Sigmoid colon (tissue), 7 donors: ENCODE measurements at regions of chr20 and their contacts with region 1.

Region 1: DNA sequence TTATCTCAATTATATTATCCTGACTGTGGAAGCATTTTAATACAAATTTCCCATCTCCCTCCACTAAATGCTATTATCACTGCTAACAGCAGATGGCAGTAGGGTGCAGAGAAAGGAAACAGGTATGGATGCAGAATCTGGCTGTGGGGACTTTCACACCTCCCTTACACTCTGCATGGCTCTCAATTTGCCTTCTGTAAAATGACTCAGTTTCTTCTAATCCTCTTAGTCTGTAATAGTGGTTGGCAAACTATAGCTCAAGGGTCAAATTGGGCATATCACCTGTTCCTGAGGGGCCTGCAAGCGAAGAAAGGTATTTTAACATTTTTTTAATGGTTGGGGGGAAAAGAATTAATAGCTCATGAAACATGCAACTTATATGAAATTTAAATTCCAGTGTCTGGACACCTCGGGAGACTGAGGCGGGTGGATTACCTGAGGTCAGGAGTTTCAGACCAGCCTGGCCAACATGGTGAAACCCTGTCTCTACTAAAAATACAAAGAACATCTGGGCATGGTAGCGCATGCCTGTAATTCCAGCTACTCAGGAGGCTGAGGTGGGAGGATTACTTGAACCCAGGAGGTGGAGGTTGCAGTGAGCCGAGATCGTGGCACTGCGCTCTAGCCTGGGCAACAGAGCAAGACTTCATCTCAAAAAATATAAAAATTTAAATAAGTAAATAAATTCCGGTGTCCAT is 83.5 kb downstream of the ZMYND8 start:
- DNase-seq: peak; percentile 71
- H3K4me3 ChIP-seq: no peak overlapping the region
- H3K27ac ChIP-seq: peak overlapping the region; percentile 75 to 84 (median 80)
- H3K4me1 ChIP-seq: peaks cover 0 to 54% (median 38%) of the 10 kb centered on the region in 4 donors
- H3K27me3 ChIP-seq: no peaks in the 10 kb centered on the region
- CTCF ChIP-seq: peak; percentile 83 to 97 (median 96)
- EP300 ChIP-seq: no peak
- POLR2A ChIP-seq: peak in 1 of 2 donors; percentile 11

Region 2: DNA sequence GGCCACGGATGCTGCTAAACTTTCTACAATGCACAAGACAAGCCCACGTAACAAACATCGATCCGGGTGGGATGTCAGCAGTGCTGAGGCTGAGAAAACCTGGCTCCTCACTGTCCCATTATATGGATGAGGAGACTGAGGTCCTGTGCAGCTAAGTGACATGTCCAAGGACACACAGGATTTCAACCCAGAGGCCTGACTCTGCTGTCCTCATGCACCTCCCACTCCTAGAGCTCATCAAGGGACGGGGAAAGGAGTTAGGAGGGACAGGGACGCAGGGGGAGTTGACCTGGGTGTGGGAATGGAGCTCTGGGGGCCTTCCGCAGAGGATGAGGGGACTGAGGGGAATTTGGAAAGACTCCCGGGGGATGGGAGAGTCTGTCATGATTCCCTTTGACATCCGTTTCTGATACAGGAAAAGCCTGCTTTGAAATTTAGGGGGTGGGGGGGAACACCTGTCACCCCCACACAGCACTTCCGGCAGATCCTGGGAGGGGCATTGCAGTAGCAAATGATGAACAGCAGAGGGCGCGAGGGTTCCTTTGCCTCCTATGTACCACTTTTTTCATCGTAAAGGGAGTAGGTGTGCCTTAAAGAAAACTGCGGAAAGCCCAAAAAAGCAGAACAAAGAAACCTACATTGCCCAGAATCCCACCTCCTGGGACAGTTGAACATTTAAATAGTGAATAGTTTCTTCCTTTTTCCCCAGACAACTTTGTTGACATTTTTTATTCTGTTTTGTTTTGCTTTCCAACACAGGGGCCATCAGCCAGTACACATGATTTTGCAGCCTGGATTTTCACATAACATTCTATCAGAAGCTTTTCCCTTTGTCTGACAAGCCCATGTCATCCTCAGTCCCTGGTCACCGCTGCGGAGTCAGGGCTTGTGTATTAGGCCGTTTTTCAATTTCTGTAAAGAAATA is 515.0 kb before region 1 on chr20:
- intact Hi-C with region 1: loop called (anchors 10 kb)
- DNase-seq: no peak
- H3K4me3 ChIP-seq: no peak overlapping the region
- H3K27ac ChIP-seq: no peak overlapping the region
- H3K4me1 ChIP-seq: peaks cover 0 to 4% (median 0%) of the 10 kb centered on the region in 4 donors
- H3K27me3 ChIP-seq: no peaks in the 10 kb centered on the region
- CTCF ChIP-seq: peak; percentile 38 to 95 (median 88)
- EP300 ChIP-seq: no peak
- POLR2A ChIP-seq: no peak

Region 3: GRCh38 chr20:47196091-47197081 is 76.7 kb before region 1 on chr20:
- intact Hi-C with region 1: loop called (anchors 2 kb)
- DNase-seq: peak; percentile 78
- H3K4me3 ChIP-seq: no peak overlapping the region
- H3K27ac ChIP-seq: no peak overlapping the region
- H3K4me1 ChIP-seq: peaks cover 0 to 6% (median 2%) of the 10 kb centered on the region in 4 donors
- H3K27me3 ChIP-seq: no peaks in the 10 kb centered on the region
- CTCF ChIP-seq: peak; percentile 72 to 96 (median 88)
- EP300 ChIP-seq: no peak
- POLR2A ChIP-seq: no peak

Region 4: DNA sequence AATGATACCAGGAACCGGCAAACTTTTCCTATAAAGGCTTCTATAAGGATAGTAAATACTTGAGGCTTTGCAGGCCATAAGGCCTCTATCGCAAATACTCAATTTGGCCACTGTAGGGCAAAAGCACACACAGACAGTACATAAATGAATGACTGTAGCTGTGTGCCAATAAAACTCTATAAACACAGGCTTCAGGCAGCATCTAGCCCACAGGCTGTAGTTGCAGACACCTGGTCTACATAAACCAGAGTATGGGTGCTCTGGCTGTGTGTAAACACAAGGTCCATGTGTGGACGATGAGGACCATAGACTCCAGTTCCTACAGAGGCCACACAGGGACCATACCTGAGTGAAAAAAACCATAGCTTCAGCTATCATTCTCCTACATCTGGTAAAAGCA is 31.2 kb after region 1 on chr20:
- intact Hi-C with region 1: no loop called
- DNase-seq: peak; percentile 77
- H3K4me3 ChIP-seq: no peak overlapping the region
- H3K27ac ChIP-seq: peak overlapping the region; percentile 67 to 97 (median 80)
- H3K4me1 ChIP-seq: peaks cover 0 to 63% (median 40%) of the 10 kb centered on the region in 4 donors
- H3K27me3 ChIP-seq: no peaks in the 10 kb centered on the region
- CTCF ChIP-seq: peak; percentile 9 to 46 (median 39)
- EP300 ChIP-seq: peak in 2 of 4 donors; percentile 47 to 56
- POLR2A ChIP-seq: no peak

Region 5: GRCh38 chr20:47317127-47317895 is 44.3 kb after region 1 on chr20:
- intact Hi-C with region 1: loop called (anchors 5 kb)
- DNase-seq: peak; percentile 95
- H3K4me3 ChIP-seq: peak overlapping the region in 2 of 4 donors; percentile 26 to 30
- H3K27ac ChIP-seq: peak overlapping the region; percentile 94 to 97 (median 96)
- H3K4me1 ChIP-seq: peaks cover 0 to 93% (median 73%) of the 10 kb centered on the region in 4 donors
- H3K27me3 ChIP-seq: no peaks in the 10 kb centered on the region
- CTCF ChIP-seq: no peak
- EP300 ChIP-seq: peak; percentile 92 to 99 (median 96)
- POLR2A ChIP-seq: peak; percentile 36 to 47

Region 6: GRCh38 chr20:47379433-47380150 is 106.5 kb after region 1 on chr20:
- intact Hi-C with region 1: loop called (anchors 1 kb)
- DNase-seq: no peak
- H3K4me3 ChIP-seq: no peak overlapping the region
- H3K27ac ChIP-seq: peak overlapping the region in 2 of 4 donors; percentile 20 to 67
- H3K4me1 ChIP-seq: peaks cover 0 to 27% (median 22%) of the 10 kb centered on the region in 4 donors
- H3K27me3 ChIP-seq: no peaks in the 10 kb centered on the region
- CTCF ChIP-seq: no peak
- EP300 ChIP-seq: peak in 2 of 4 donors; percentile 55 to 60
- POLR2A ChIP-seq: no peak

Region 7: GRCh38 chr20:47501483-47502270 is 228.6 kb after region 1 on chr20 and contains the start of gene NCOA3:
- intact Hi-C with region 1: loop called (anchors 10 kb)
- DNase-seq: peak; percentile 95
- H3K4me3 ChIP-seq: peak within 1 kb of the TSS; percentile 69 to 94 (median 91)
- H3K27ac ChIP-seq: peak within 1 kb of the TSS; percentile 91 to 96 (median 94)
- H3K4me1 ChIP-seq: peaks cover 0 to 24% (median 17%) of the 10 kb centered on the region in 4 donors
- H3K27me3 ChIP-seq: no peaks in the 10 kb centered on the region
- CTCF ChIP-seq: peak; percentile 42 to 81 (median 70)
- EP300 ChIP-seq: no peak
- POLR2A ChIP-seq: peak; percentile 93 to 96
- total RNA-seq, gene NCOA3: 22.8 to 51.0 (median 26.4) TPM

Region 8: DNA sequence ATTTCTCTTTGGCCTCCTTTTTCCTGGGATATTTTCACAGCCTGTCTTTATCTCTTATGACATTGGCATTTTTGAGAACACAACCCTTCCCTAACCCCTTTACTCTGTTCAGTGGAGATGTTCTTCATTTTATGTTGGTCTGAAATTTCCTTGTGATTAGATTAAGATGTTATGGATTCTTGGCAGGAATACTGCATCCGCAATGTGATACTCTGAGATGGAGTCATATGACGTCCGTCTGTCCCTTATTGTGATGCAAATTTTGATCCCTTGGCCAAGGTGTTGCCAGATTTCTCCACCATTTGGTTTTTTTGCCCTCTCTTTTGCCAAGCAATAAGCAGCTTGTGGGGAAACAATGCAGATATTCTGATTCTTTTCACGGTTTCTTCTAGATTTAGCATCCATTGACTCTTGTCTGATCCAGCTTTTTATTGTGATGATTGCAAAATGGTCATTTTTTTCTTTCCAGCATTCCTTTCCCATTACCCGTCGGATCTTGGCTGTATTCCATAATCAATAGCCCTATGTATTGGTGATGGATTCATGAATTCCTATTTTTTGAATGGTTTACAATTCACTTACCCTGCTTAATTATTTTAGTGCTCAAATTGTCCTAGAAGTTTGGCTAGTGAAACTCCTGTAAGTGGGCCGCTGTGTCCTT is 313.7 kb after region 1 on chr20:
- intact Hi-C with region 1: no loop called
- DNase-seq: no peak
- H3K4me3 ChIP-seq: no peak overlapping the region
- H3K27ac ChIP-seq: no peak overlapping the region
- H3K4me1 ChIP-seq: peaks cover 0 to 11% (median 1%) of the 10 kb centered on the region in 4 donors
- H3K27me3 ChIP-seq: no peaks in the 10 kb centered on the region
- CTCF ChIP-seq: no peak
- EP300 ChIP-seq: no peak
- POLR2A ChIP-seq: no peak

Region 9: DNA sequence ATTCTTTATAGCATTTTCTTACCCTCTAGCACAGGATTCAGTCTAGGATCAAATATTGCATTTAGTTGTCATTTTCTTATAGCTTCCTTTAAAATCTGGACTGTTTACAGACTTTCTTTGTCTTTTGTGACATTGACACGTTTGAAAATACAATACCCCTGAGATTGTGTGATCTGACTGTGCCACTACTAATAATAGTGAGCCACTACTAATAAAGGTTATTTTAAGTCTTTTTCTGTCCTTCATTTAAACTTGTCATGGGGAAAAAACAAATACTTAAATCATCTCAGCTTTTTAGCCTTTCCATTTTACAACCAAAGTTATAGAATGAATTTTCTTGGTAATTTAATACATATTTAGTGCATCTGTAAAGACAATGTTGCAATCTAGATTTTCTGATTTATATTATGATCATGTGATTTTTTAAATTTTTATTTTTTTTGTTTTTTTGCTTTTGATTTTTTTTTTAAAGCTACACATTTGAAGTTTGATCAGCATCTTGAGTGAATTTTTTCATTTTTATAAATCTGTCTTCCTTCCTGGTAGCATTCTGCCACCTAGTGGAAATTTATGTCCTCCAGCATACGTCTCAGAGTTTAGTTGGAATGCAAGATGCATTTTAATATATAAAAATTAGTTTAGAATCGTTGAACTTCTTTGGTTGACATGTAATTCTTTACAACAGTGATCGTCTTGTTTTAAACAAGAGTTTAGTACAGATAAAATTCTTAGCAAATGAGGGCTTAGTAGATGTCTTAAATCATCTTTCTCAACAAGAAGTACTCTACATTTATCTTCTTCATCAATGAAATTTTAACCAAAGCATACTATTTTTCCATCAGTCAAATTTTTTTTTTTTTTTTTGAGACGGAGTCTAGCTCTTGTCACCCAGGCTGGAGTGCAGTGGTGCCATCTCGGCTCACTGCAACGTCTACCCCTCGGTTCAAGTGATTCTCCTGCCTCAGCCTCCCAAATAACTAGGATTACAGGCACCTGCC is 348.1 kb after region 1 on chr20:
- intact Hi-C with region 1: loop called (anchors 5 kb)
- DNase-seq: no peak
- H3K4me3 ChIP-seq: no peak overlapping the region
- H3K27ac ChIP-seq: no peak overlapping the region
- H3K4me1 ChIP-seq: peaks cover 0 to 4% (median 0%) of the 10 kb centered on the region in 4 donors
- H3K27me3 ChIP-seq: no peaks in the 10 kb centered on the region
- CTCF ChIP-seq: peak; percentile 64 to 85 (median 66)
- EP300 ChIP-seq: no peak
- POLR2A ChIP-seq: no peak